ENCODE measurements at regions of chr1 and their contacts with region 1.

Region 1: GRCh38 chr1:145918144-145918992 is at the start of gene PEX11B:
- DNase-seq: peak; percentile 94
- ATAC-seq: peak; percentile 97
- H3K4me3 ChIP-seq: peak within 1 kb of the TSS; percentile 83
- H3K27ac ChIP-seq: peak within 1 kb of the TSS; percentile 87
- H3K4me1 ChIP-seq: peaks cover 22% of the 10 kb centered on the region
- H3K27me3 ChIP-seq: no peaks in the 10 kb centered on the region
- CTCF ChIP-seq: no peak
- total RNA-seq, gene PEX11B: 31.0 TPM

Region 2: DNA sequence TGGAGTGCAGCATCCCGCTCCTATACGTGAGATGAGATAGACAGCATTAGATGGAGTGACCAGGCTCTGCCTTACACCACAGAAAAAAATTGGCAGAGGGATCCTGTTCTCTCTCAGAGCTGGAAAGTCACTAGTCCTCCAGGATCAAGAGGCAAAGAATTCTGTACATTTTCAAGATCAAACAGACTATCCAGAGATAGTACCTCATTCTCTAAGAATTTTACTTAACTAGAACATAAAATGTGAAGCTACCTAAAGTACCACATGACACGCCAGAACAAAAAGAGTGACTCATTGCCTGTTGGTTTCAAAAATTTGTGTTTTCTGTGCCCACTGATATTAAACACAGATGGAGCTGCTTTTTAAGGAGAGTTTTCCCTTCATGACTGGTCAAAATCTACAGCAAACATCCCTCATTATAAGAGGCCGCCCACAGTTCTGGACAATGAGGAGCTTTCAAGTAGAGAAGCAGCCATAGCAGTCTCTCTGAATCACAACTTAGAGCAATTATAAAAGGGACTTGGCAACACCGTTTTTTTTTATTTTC is 166.8 kb before region 1 on chr1:
- intact Hi-C with region 1: no loop called
- DNase-seq: no peak
- ATAC-seq: no peak
- H3K4me3 ChIP-seq: no peak overlapping the region
- H3K27ac ChIP-seq: no peak overlapping the region
- H3K4me1 ChIP-seq: no peaks in the 10 kb centered on the region
- H3K27me3 ChIP-seq: no peaks in the 10 kb centered on the region
- CTCF ChIP-seq: no peak

Region 3: GRCh38 chr1:145845514-145846161 is 72.7 kb before region 1 on chr1 and contains the start of gene NUDT17:
- intact Hi-C with region 1: loop called (anchors 10 kb)
- DNase-seq: peak; percentile 92
- ATAC-seq: peak; percentile 91
- H3K4me3 ChIP-seq: peak within 1 kb of the TSS; percentile 66
- H3K27ac ChIP-seq: peak within 1 kb of the TSS; percentile 75
- H3K4me1 ChIP-seq: peaks cover 16% of the 10 kb centered on the region
- H3K27me3 ChIP-seq: no peaks in the 10 kb centered on the region
- CTCF ChIP-seq: peak; percentile 98
- total RNA-seq, gene NUDT17: 1.8 TPM

Region 4: GRCh38 chr1:145978854-145979759 is 60.7 kb after region 1 on chr1:
- intact Hi-C with region 1: loop called (anchors 10 kb)
- DNase-seq: peak; percentile 90
- ATAC-seq: peak; percentile 96
- H3K4me3 ChIP-seq: peak overlapping the region; percentile 35
- H3K27ac ChIP-seq: peak overlapping the region; percentile 98
- H3K4me1 ChIP-seq: peaks cover 69% of the 10 kb centered on the region
- H3K27me3 ChIP-seq: no peaks in the 10 kb centered on the region
- CTCF ChIP-seq: peak; percentile 19